Motor neuron (in vitro differentiated cells): ENCODE measurements at regions of chr9 and their contacts with region 1.

Region 1: DNA sequence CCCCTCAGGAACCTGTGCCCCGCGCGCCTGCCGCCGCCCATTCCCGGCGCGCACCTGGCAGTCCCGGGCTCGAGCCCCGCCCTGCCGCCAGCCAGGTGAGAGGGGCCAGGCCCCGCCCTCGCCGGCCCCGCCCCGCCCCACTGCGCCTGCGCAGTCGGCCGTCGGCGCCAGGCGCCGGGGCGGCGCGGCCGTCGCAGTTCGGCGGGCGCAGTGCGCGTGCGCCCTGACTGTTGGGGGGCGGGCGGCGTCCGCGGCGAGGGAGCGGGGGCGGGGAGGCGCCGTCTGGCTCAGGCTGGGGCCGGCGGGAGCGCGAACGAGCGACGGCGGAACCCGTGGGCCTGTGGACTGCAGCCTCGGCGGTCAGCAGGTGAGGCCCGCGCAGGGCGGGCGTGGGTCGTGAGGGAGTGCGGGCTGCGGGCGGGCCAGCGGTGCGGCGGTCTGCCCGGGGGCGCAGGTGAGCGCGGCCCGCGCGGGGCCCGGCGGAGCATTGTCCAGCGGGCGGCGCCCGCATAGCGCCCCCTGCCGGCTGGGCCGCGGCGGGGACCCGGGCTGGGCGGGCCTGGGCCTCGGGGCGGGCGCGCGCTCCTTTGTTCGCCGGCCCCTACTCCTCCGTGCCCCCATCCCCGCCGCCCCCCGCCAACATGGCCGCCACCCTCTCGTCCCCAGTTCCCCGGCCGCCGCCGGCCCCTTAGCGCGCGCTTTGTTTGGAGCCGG is at the start of gene SPIN1:
- ATAC-seq: peak; percentile 78 to 88 (median 87)
- H3K4me3 ChIP-seq: peak within 1 kb of the TSS; percentile 72 to 99 (median 87)
- H3K27ac ChIP-seq: peak within 1 kb of the TSS; percentile 97
- H3K4me1 ChIP-seq: peaks cover 6 to 12% of the 10 kb centered on the region in 2 donors
- total RNA-seq, gene SPIN1: 42.0 to 114 (median 64.2) TPM

Region 2: GRCh38 chr9:88076286-88077090 is 311.8 kb before region 1 on chr9:
- in situ Hi-C with region 1: loop called in 1 of 9 experiments (anchors 25 kb)
- ATAC-seq: peak; percentile 83 to 95 (median 90)
- H3K4me3 ChIP-seq: peak overlapping the region; percentile 35 to 43 (median 36)
- H3K27ac ChIP-seq: peak overlapping the region; percentile 80 to 87
- H3K4me1 ChIP-seq: peaks cover 4 to 12% of the 10 kb centered on the region in 2 donors

Region 3: DNA sequence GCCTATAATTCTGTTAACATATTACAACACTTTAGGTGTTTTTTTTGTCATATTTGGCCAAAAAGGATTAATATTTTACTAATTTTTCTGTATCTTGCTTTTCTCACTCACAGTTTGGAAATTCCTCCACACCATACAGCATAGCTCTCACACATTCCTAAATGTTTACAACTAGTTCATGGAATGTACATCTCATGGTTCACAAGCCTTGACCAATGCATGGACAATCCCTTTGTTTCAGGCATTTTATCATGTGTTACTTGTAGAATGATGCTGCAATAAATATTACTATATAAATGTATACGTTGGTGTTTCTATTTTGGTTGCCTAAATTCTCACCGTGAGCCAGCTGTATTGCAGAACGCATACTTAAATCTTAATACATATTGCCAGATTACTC is 169.6 kb before region 1 on chr9:
- in situ Hi-C with region 1: no loop called
- ATAC-seq: no peak
- H3K4me3 ChIP-seq: no peak overlapping the region
- H3K27ac ChIP-seq: no peak overlapping the region
- H3K4me1 ChIP-seq: peaks cover 0 to 3% of the 10 kb centered on the region in 2 donors

Region 4: DNA sequence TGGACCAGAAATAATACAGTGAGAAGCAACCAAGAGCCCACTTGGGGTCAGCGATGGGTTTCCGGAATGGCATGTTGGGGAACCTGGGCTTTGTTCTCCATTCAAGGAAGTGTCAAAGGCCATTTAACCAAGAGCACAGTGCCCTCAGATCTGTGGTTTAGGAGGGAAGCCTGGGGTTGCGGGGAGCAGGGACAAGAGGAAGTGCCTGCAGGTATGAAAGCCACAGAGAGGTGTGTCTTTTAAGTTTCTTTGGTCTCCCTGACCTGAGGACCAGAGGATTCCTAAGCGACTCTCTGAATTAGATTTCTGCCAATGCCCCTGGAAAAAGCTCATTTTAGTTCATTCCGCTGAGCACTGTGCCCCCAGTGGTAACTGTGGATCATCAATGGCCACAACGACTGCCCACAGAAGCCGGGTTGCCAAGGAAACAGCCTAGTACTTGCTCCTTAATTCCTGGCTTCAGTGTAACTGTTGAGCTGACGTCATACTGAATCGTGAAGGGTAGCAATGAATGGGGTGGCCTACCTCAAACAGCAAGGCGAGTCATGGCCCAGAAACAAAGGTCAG is 107.4 kb before region 1 on chr9:
- in situ Hi-C with region 1: no loop called
- ATAC-seq: peak in 5 of 8 experiments; percentile 99 to 100 (median 99)
- H3K4me3 ChIP-seq: no peak overlapping the region
- H3K27ac ChIP-seq: peak overlapping the region in 1 of 2 donors; percentile 38
- H3K4me1 ChIP-seq: peaks cover 10 to 11% of the 10 kb centered on the region in 2 donors

Region 5: GRCh38 chr9:88567870-88568269 is 179.5 kb after region 1 on chr9:
- in situ Hi-C with region 1: no loop called
- ATAC-seq: no peak
- H3K4me3 ChIP-seq: no peak overlapping the region
- H3K27ac ChIP-seq: no peak overlapping the region
- H3K4me1 ChIP-seq: peaks cover 0 to 5% of the 10 kb centered on the region in 2 donors